Testis (tissue), 5 donors: ENCODE measurements at regions of chr12 and their contacts with region 1.

Region 1: DNA sequence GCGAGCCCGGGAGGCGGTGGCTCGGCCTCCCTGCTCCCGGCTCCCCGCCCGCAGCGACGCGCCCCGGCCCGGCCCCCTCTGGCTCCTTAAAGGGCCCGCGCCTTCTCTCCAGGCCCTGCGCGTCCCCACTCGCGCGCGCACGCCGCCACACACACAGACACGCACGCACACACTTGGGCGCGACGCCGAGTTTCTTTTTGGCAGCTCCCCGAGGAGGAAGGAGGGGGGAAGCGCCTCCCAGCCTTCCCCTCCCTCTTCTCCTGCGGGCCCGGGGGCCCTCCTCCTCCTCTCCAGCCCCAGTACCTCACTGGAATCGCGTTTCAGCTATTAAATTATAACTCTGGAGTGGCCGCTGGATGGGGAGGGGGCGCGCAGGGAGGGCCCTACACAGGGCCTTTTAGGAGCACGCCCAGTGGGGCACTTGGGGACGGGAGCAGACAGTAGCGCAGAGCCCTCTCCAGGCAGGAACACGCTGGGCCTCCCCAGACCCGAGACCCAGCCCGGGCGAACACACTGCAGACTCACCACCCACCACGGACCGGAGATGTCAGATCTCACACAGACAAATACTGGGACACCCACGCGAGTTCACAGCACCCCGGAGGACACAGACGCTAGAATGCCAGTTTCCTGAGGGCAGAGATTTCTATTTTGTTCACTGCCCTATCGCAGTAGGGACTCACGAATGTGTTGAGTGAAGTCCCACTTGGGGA is 405 bp upstream of the NCOR2 start:
- DNase-seq: peak; percentile 96
- H3K4me3 ChIP-seq: peak overlapping the region; percentile 44 to 59
- H3K27ac ChIP-seq: peak overlapping the region; percentile 49 to 85
- H3K4me1 ChIP-seq: peaks cover 44% of the 10 kb centered on the region
- H3K27me3 ChIP-seq: no peaks in the 10 kb centered on the region
- CTCF ChIP-seq: no peak
- POLR2A ChIP-seq: no peak

Region 2: GRCh38 chr12:124388679-124389536 is 178.9 kb before region 1 on chr12:
- intact Hi-C with region 1: loop called (anchors 10 kb)
- DNase-seq: peak; percentile 92
- H3K4me3 ChIP-seq: peak overlapping the region; percentile 50 to 59
- H3K27ac ChIP-seq: peak overlapping the region; percentile 80 to 82
- H3K4me1 ChIP-seq: peaks cover 71% of the 10 kb centered on the region
- H3K27me3 ChIP-seq: no peaks in the 10 kb centered on the region
- CTCF ChIP-seq: no peak
- POLR2A ChIP-seq: no peak

Region 3: GRCh38 chr12:124518051-124518932 is 49.5 kb before region 1 on chr12:
- intact Hi-C with region 1: loop called (anchors 5 kb)
- DNase-seq: peak; percentile 98
- H3K4me3 ChIP-seq: peak overlapping the region; percentile 40 to 41
- H3K27ac ChIP-seq: peak overlapping the region; percentile 93 to 97
- H3K4me1 ChIP-seq: peaks cover 72% of the 10 kb centered on the region
- H3K27me3 ChIP-seq: no peaks in the 10 kb centered on the region
- CTCF ChIP-seq: no peak
- POLR2A ChIP-seq: no peak

Region 4: DNA sequence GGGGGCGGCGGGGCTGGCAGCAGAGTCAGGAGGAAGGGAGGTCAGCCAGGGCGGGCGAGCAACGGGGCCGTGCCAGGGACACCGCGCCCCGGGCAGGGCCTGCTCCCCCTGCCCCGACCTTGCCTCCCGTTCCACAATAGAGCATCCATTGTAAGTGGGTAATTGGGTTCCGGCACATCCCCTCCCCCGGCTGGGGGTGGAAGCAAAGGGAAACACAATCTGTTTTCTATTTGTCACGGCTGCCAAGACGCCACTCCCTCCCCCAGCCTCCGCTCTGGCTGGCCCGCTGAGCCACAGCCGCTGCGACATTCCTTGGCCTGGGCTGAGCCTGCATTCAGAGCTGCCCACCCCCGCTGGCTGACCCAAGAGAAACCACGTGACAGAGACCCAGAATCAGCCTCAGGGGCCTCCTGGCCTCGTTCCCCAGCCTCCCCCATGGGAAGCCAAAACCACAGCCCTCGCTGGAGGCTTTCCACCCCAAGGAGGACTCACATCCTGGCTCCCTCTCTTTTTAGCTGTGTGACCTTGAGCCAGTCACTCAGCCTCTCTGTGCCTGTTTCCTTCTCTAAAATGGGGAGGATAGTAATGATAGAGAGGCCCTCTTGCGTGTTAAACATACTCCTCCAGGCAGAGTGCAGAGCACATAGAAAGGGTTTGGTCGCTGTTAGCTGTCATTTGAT is 178.2 kb after region 1 on chr12:
- intact Hi-C with region 1: loop called (anchors 5 kb)
- DNase-seq: peak; percentile 98
- H3K4me3 ChIP-seq: peak overlapping the region in 1 of 2 donors; percentile 15
- H3K27ac ChIP-seq: peak overlapping the region; percentile 42 to 74
- H3K4me1 ChIP-seq: peaks cover 38% of the 10 kb centered on the region
- H3K27me3 ChIP-seq: no peaks in the 10 kb centered on the region
- CTCF ChIP-seq: no peak
- POLR2A ChIP-seq: no peak

Region 5: DNA sequence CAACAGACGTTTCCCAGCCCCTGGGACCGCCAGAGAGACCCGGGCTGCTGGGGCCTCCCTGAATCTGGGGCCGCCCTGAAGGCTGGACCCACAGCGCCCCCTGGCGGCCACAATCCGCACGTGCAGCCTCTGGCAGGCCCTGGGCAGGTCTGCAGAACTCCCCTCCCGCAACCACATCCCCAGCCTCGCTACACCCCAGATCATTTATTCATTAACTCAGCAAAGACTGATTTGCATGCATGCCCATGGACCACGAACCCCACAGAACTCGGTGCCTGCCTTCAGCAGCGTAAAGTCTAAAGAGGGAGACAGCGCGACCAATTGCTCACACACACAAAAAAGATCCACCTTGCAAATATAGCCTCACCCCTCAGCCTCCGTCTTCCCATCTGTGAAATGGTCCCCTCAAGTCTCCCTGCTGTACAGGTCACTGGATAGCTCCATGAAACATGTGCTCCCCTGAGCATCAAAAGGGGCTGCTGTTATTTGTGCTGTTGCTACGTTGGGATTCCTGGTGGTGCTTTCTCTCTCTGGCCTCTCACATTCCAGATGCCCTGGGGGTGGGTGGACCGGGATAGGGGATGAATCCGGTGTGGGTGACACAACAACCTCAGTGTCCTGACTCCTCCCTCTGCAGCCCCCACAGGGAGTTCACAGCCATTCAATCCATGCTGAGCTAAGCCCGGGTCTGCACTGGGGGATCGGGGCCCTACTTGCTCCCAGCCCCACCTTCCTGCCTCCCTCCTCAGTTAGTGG is 199.4 kb after region 1 on chr12:
- intact Hi-C with region 1: loop called (anchors 5 kb)
- DNase-seq: peak; percentile 87
- H3K4me3 ChIP-seq: no peak overlapping the region
- H3K27ac ChIP-seq: no peak overlapping the region
- H3K4me1 ChIP-seq: peaks cover 29% of the 10 kb centered on the region
- H3K27me3 ChIP-seq: no peaks in the 10 kb centered on the region
- CTCF ChIP-seq: peak; percentile 99 to 100 (median 100)
- POLR2A ChIP-seq: no peak